ENCODE measurements at regions of chr1 and their contacts with region 1.

Region 1: DNA sequence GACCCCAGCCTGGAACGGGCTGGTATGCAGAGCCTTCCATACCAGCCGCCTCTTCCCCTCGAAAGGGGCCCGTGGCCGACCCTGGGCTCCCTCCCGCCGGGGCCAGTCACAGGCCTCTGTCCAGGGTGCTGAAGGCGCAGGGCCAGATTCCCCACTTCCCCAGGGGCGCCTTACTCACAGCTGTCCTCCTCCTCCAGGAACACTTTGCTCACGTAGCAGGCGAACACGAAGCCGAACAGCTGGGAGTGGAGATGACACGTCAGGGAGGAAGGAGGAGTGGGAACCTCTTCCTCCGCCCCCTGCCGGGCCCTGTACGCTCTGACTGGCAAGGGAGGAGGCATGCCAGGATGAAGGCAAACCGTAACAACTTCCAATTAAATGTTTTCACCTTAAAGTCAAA is 57.3 kb downstream of the NKAIN1 start:
- DNase-seq: peak; percentile 73 to 77
- H3K4me3 ChIP-seq: no peak overlapping the region; the same call in 1 of the 2 replicates
- H3K27ac ChIP-seq: no peak overlapping the region
- H3K4me1 ChIP-seq: no peaks in the 10 kb centered on the region
- H3K27me3 ChIP-seq: no peaks in the 10 kb centered on the region
- CTCF ChIP-seq: peak; percentile 52

Region 2: DNA sequence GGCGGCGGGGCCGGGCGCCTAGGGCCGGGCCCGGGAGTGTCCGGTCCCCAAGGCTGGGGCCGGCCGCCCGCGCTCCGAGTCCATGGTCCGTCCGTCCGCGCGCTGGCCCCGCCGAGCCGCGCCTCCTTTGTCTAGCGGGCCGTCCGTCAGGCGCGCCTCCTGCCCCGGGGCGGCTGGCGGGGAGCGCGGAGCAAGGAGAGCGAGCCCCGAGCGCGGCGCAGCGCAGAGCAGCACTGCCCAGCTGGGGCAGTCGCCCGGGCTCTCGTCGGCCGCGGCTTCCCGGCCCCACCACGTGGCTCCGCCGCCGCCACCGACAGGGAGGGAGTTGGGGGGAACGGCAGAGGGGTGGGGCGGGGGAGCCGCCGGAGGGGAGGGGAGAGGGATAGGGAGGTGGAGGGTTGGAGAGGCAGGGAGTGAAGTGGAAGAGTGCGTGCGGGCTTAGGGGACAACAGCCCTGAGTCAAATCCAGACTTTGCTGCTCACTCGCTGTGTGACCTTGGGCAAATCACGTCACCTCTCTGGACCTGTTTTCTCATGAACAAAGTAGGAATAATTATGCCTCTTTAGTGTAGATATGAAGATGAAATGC is 57.4 kb after region 1 on chr1 and contains the start of gene NKAIN1:
- CTCF ChIA-PET with region 1: no interaction called
- POLR2A ChIA-PET with region 1: no interaction called
- intact Hi-C with region 1: no loop called
- DNase-seq: peak in 1 of 2 experiments; percentile 29
- H3K4me3 ChIP-seq: no peak within 1 kb of the TSS
- H3K27ac ChIP-seq: no peak within 1 kb of the TSS
- H3K4me1 ChIP-seq: no peaks in the 10 kb centered on the region
- H3K27me3 ChIP-seq: peaks cover 43% of the 10 kb centered on the region
- CTCF ChIP-seq: no peak
- total RNA-seq, gene NKAIN1: 0.96 TPM in 1 of 2 replicates, not detected in the other

Region 3: GRCh38 chr1:31249854-31250253 is 67.5 kb after region 1 on chr1:
- CTCF ChIA-PET with region 1: interaction called, 17 read pairs
- POLR2A ChIA-PET with region 1: interaction called, 3 read pairs
- intact Hi-C with region 1: no loop called
- DNase-seq: no peak
- H3K4me3 ChIP-seq: no peak overlapping the region
- H3K27ac ChIP-seq: no peak overlapping the region
- H3K4me1 ChIP-seq: no peaks in the 10 kb centered on the region
- H3K27me3 ChIP-seq: no peaks in the 10 kb centered on the region
- CTCF ChIP-seq: no peak

Region 4: DNA sequence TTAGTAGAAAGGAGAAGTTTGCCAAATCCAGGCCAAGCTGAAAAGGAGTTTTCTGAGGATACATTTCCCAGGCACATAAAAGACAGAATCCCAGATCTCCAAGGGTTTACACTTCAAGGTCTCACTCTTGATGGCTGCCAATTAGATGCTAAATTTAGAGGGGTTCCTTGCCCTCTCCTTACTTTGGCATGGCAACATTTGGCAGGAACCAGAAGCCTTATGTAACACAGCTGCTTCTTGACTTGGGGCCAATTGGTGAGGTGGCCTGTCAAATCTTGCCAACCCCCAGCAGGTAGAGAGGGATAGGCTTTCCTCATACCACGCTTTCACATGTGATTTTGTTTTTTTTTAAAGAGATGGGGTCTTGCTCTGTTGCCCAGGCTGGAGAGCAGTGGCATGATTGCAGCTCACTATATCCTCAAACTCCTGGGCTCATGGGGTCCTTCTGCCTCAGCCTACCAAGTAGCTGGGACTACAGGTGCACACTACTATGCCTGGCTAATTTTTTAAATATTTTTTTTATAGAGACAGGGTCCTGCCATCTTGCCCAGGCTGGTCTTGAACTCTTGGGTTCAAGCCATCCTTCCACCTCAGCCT is 82.5 kb after region 1 on chr1:
- CTCF ChIA-PET with region 1: interaction called, 12 read pairs
- POLR2A ChIA-PET with region 1: no interaction called
- intact Hi-C with region 1: no loop called
- DNase-seq: no peak
- H3K4me3 ChIP-seq: no peak overlapping the region
- H3K27ac ChIP-seq: no peak overlapping the region
- H3K4me1 ChIP-seq: no peaks in the 10 kb centered on the region
- H3K27me3 ChIP-seq: no peaks in the 10 kb centered on the region
- CTCF ChIP-seq: no peak

Region 5: GRCh38 chr1:31335007-31335406 is 152.7 kb after region 1 on chr1:
- CTCF ChIA-PET with region 1: no interaction called
- POLR2A ChIA-PET with region 1: interaction called, 3 read pairs
- intact Hi-C with region 1: loop called (anchors 2 kb)
- DNase-seq: no peak
- H3K4me3 ChIP-seq: no peak overlapping the region
- H3K27ac ChIP-seq: no peak overlapping the region
- H3K4me1 ChIP-seq: no peaks in the 10 kb centered on the region
- H3K27me3 ChIP-seq: no peaks in the 10 kb centered on the region
- CTCF ChIP-seq: peak; percentile 54

Region 6: DNA sequence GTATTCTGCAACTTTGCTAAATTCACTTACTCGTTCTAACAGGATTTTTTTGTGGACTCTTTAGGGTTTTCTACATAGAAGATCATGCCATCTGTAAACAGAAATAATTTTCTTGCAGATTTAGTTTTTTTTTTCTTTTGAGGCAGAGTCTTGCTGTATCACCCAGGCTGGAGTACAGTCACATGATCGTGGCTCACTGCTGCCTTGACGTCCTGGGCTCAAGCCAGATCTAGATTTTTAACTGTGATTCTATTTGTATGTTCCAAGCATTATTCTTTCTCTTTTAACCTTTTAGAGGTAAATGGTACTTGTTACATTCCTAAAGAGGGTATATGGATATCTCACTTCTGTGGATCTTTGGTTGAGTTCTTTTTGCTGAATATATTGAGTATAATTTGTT is 171.9 kb after region 1 on chr1:
- CTCF ChIA-PET with region 1: no interaction called
- POLR2A ChIA-PET with region 1: no interaction called
- intact Hi-C with region 1: no loop called
- DNase-seq: no peak
- H3K4me3 ChIP-seq: no peak overlapping the region
- H3K27ac ChIP-seq: no peak overlapping the region
- H3K4me1 ChIP-seq: no peaks in the 10 kb centered on the region
- H3K27me3 ChIP-seq: no peaks in the 10 kb centered on the region
- CTCF ChIP-seq: no peak

Region 7: GRCh38 chr1:31422505-31423319 is 240.4 kb after region 1 on chr1:
- CTCF ChIA-PET with region 1: interaction called, 3 read pairs
- POLR2A ChIA-PET with region 1: no interaction called
- intact Hi-C with region 1: loop called (anchors 1 kb)
- DNase-seq: peak; percentile 81 to 82
- H3K4me3 ChIP-seq: no peak overlapping the region
- H3K27ac ChIP-seq: peak overlapping the region; percentile 82
- H3K4me1 ChIP-seq: peaks cover 27% of the 10 kb centered on the region
- H3K27me3 ChIP-seq: no peaks in the 10 kb centered on the region
- CTCF ChIP-seq: peak; percentile 86

Region 8: GRCh38 chr1:31617917-31618660 is 435.7 kb after region 1 on chr1:
- CTCF ChIA-PET with region 1: no interaction called
- POLR2A ChIA-PET with region 1: no interaction called
- intact Hi-C with region 1: loop called (anchors 1 kb)
- DNase-seq: peak in 1 of 2 experiments; percentile 43
- H3K4me3 ChIP-seq: peak overlapping the region; percentile 75
- H3K27ac ChIP-seq: no peak overlapping the region
- H3K4me1 ChIP-seq: no peaks in the 10 kb centered on the region
- H3K27me3 ChIP-seq: no peaks in the 10 kb centered on the region
- CTCF ChIP-seq: peak; percentile 98

Region 9: GRCh38 chr1:31715087-31715872 is 532.9 kb after region 1 on chr1:
- CTCF ChIA-PET with region 1: no interaction called
- POLR2A ChIA-PET with region 1: no interaction called
- intact Hi-C with region 1: loop called (anchors 10 kb)
- DNase-seq: peak; percentile 90 to 93
- H3K4me3 ChIP-seq: peak overlapping the region; percentile 59
- H3K27ac ChIP-seq: no peak overlapping the region
- H3K4me1 ChIP-seq: peaks cover 45% of the 10 kb centered on the region
- H3K27me3 ChIP-seq: peaks cover 7% of the 10 kb centered on the region; the same call in 1 of the 2 replicates
- CTCF ChIP-seq: peak; percentile 98

Measured in PC-9 (cell line).